ENCODE measurements at regions of chr20 and their contacts with region 1.

Region 1: DNA sequence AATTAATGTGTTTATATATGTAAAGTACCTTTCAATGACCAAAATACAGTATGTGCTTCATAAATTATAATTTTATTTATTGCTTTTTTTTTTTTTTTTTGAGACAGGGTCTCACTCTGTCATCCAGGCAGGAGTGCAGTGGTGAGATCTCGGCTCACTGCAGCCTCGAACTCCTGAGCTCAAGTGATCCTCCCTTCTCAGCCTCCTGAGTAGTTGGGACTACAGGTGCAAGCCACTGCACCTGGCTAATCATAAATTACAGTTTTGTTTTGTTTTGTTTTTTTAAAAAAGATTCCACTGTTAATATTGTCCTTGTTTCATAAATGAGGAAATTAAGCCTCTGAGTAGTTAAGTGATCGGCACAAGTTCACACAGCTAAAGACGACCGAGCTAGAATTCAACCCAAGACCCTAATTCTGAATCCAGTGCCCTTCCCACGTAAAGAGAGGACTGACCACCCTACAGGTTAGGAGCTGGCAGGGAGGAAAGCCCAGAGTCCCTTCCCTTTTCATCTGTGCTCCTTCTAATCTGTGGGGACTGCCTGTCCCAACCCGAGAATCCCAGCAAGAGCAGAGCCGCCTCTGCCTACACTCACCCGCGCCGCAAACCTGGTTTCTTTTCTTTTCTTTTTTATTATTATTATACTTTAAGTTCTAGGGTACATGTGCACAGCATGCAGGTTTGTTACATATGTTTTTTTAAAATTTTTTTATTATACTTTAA is 8.5 kb upstream of the GDF5 start:
- DNase-seq: no peak
- H3K4me3 ChIP-seq: peak overlapping the region in 5 of 7 experiments; percentile 19 to 76 (median 46)
- H3K27ac ChIP-seq: no peak overlapping the region
- H3K4me1 ChIP-seq: peaks cover 0 to 5% (median 1%) of the 10 kb centered on the region in 4 experiments
- H3K27me3 ChIP-seq: no peaks in the 10 kb centered on the region

Region 2: DNA sequence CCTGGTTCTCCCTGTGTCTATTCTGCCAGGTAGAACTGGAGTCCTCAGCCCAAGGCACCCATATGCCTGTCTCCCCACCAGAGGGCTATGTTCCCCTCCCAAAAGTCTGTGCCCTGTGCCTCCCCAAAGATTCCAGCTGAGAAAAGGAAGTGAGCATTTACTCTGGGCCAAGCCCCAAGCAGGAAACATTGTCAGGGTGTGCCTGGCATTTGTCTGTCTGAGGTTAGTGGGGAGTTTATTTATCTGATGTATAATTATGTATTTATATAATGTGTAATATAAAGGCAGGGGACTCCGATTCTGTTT is 14.1 kb before region 1 on chr20:
- CTCF ChIA-PET with region 1: interaction called, 11 read pairs
- POLR2A ChIA-PET with region 1: no interaction called
- DNase-seq: peak in 1 of 3 donors; percentile 30
- H3K4me3 ChIP-seq: no peak overlapping the region
- H3K27ac ChIP-seq: no peak overlapping the region
- H3K4me1 ChIP-seq: peaks cover 0 to 9% (median under 1%) of the 10 kb centered on the region in 4 experiments
- H3K27me3 ChIP-seq: no peaks in the 10 kb centered on the region